Sigmoid colon (tissue), 7 donors: ENCODE measurements at regions of chr3 and their contacts with region 1.

Region 1: GRCh38 chr3:111882799-111883198 is 23.7 kb downstream of the PHLDB2 start:
- DNase-seq: no peak
- H3K4me3 ChIP-seq: no peak overlapping the region
- H3K27ac ChIP-seq: peak overlapping the region in 3 of 4 donors; percentile 32 to 59 (median 53)
- H3K4me1 ChIP-seq: peaks cover 0 to 68% (median 38%) of the 10 kb centered on the region in 4 donors
- H3K27me3 ChIP-seq: no peaks in the 10 kb centered on the region
- CTCF ChIP-seq: no peak
- EP300 ChIP-seq: no peak
- POLR2A ChIP-seq: no peak

Region 2: DNA sequence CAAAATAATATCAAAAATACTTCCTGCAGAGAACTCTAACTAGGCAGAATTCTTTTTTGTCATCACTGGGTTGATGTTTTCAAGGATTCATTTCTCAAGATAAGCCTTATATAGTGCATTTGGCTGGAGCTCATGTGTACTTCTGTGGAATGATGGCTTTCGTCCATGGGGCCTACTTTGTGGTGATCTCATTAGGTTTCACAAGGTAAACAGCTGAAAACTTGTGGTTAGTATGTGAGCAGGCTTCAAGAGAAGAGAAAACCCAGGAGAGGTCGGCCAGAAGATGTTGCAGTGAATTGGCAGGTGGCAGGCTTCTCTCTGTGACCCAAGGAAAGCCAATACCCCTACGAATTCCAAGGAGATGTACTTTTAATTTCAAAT is 145.1 kb before region 1 on chr3:
- intact Hi-C with region 1: no loop called
- DNase-seq: peak; percentile 86
- H3K4me3 ChIP-seq: no peak overlapping the region
- H3K27ac ChIP-seq: peak overlapping the region; percentile 71 to 83 (median 76)
- H3K4me1 ChIP-seq: peaks cover 0 to 48% (median 42%) of the 10 kb centered on the region in 4 donors
- H3K27me3 ChIP-seq: no peaks in the 10 kb centered on the region
- CTCF ChIP-seq: no peak
- EP300 ChIP-seq: no peak
- POLR2A ChIP-seq: no peak

Region 3: DNA sequence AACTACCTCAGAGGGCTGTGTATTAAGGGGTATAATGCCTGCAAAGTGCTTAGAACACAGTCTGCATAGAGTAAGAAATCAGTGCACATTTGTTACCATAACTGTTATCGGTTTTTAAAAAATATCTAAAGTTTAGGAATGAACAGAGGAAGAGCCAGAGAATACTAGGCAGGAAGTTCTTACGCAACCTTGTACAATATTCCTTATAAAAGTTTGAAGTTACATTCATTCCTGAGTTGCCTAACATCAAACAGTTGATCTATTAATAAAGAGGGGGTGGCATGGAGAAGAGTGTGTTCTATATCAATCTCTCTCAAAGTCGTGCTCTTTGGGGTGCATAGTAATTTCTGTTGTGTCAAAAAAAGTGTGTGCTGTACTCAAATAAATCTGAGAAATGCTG is 45.7 kb before region 1 on chr3:
- intact Hi-C with region 1: no loop called
- DNase-seq: no peak
- H3K4me3 ChIP-seq: no peak overlapping the region
- H3K27ac ChIP-seq: no peak overlapping the region
- H3K4me1 ChIP-seq: no peaks in the 10 kb centered on the region
- H3K27me3 ChIP-seq: no peaks in the 10 kb centered on the region
- CTCF ChIP-seq: no peak
- EP300 ChIP-seq: no peak
- POLR2A ChIP-seq: no peak

Region 4: GRCh38 chr3:111924283-111924682 is 41.5 kb after region 1 on chr3:
- intact Hi-C with region 1: loop called (anchors 5 kb)
- DNase-seq: peak; percentile 93
- H3K4me3 ChIP-seq: no peak overlapping the region
- H3K27ac ChIP-seq: peak overlapping the region; percentile 55 to 77 (median 66)
- H3K4me1 ChIP-seq: peaks cover 0 to 70% (median 37%) of the 10 kb centered on the region in 4 donors
- H3K27me3 ChIP-seq: no peaks in the 10 kb centered on the region
- CTCF ChIP-seq: no peak
- EP300 ChIP-seq: peak in 2 of 4 donors; percentile 63 to 71
- POLR2A ChIP-seq: no peak